GM13977 (cell line): ENCODE measurements at regions of chr12 and their contacts with region 1.

Region 1: GRCh38 chr12:92784795-92785562 is 82.2 kb downstream of the PLEKHG7 start:
- DNase-seq: peak; percentile 57
- CTCF ChIP-seq: peak; percentile 55

Region 2: DNA sequence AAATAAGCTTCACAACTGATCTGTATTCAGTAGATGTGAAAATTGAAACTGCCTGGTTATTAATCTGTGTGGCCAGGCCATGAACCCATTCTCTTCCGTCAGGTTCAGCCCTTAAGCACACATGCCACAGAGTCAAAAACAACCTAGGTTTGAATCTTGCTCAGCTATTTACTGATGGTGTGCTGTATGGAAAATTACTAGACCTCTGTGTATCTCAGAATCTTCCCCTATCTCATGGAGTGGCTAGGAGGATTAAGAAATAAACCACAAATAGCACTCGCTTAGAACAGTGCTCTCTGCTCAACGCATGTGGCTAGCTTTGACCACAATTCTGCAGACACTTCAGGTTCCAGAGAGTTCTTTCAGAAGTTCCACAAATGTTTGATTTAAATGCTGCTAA is 322.9 kb before region 1 on chr12:
- in situ Hi-C with region 1: no loop called
- DNase-seq: no peak
- CTCF ChIP-seq: no peak

Region 3: DNA sequence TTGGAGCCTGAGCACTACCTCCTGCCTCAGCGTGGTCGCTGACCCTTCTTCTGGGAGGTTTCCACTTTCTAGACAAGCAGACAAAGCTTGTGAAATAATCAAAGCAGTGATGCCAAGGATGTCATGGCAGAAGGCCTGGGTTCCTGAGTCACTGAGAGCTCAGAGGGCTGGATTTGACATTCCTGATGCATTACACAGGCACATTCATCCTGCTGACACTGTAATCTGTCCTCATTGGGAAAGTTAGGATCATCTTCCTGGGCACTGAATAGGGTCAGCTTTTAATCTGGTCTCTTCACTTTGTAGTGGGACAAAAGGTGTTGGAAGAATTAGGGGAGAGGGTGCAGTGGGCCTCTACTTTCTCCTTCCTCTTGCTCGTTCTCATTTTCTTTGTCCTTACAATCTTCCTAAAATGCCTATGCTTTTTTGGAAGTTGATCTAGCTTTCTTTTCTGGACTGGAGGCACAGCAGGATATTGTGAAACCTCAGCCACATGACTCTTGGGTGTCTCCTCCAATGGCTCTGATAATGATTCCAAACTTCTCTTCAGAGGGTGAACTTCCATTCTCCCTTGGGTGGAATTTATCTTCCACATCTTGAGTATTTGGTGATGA is 114.5 kb after region 1 on chr12:
- in situ Hi-C with region 1: no loop called
- DNase-seq: no peak
- CTCF ChIP-seq: no peak

Region 4: GRCh38 chr12:93050026-93050747 is 265.2 kb after region 1 on chr12:
- in situ Hi-C with region 1: no loop called
- DNase-seq: no peak
- CTCF ChIP-seq: no peak

Region 5: GRCh38 chr12:93080994-93081797 is 296.2 kb after region 1 on chr12:
- in situ Hi-C with region 1: no loop called
- DNase-seq: no peak
- CTCF ChIP-seq: no peak

Region 6: GRCh38 chr12:93419388-93420034 is 634.5 kb after region 1 on chr12:
- in situ Hi-C with region 1: loop called (anchors 10 kb)
- DNase-seq: peak; percentile 20
- CTCF ChIP-seq: peak; percentile 45